ENCODE measurements at regions of chr2 and their contacts with region 1.

Region 1: DNA sequence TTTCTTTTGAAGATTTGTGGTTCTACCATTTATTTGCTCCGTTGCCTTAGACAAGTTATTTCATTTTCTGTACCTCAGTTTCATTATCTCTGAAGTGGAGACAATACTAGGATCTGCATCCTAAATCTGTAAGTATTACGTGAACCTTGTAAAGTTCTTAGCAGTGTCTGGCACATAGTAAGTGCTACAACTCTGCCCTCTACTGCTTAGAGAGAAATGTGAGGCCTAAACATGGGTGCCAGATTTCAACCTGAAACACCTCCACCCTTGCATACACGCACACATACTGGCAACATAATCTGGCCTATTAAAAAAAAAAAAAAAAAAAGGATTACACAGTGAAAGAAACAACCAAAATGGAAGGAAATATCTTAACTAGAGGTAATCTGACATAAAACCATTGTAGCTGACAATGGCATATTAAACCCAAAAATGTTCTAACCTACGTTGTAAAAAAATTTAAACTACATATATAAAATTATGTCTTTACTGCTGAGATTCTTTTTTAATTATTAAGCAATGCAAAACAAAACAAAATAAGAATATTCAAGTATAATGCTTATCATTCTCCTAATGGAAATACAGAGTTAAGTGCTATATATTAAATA is 132.6 kb downstream of the MAP2 start:
- DNase-seq: no peak
- H3K4me3 ChIP-seq: no peak overlapping the region
- H3K27ac ChIP-seq: no peak overlapping the region
- H3K4me1 ChIP-seq: no peaks in the 10 kb centered on the region
- H3K27me3 ChIP-seq: no peaks in the 10 kb centered on the region
- CTCF ChIP-seq: peak; percentile 46 to 53

Region 2: GRCh38 chr2:209334198-209335017 is 222.1 kb before region 1 on chr2:
- intact Hi-C with region 1: loop called (anchors 5 kb)
- DNase-seq: peak; percentile 25 to 65
- H3K4me3 ChIP-seq: no peak overlapping the region
- H3K27ac ChIP-seq: no peak overlapping the region
- H3K4me1 ChIP-seq: peaks cover 0 to 4% (median 0%) of the 10 kb centered on the region in 4 donors
- H3K27me3 ChIP-seq: no peaks in the 10 kb centered on the region
- CTCF ChIP-seq: peak; percentile 81 to 91

Region 3: DNA sequence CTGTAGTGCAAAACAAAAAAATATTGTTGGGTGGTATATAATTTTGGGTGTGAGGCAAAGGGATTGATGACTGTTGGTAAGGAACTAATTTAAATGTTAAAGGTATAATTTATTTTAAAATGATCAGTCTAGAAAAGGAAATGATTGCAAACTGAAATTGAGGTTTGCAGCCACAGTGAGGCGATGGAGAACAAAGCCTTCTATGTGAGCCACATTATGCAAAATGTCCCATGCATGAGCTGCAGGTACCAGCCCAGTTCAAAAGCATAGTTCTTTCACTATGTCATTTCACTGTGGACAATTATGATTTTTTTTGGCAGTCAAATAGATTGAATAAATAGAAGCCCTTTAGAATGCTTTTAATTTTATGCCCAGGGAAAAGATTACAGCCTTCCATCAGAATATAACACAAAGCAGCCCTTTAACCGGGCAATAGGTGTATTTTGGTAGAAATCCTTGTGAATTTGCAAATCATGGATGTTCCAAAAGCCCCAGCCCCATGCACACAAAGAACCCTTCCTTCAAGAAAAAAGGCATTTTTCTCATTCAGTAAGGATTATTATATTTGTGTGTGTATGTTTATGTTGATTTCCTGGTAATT is 130.9 kb before region 1 on chr2:
- intact Hi-C with region 1: loop called (anchors 5 kb)
- DNase-seq: no peak
- H3K4me3 ChIP-seq: peak overlapping the region; percentile 79 to 82
- H3K27ac ChIP-seq: no peak overlapping the region
- H3K4me1 ChIP-seq: peaks cover 0 to 37% (median 8%) of the 10 kb centered on the region in 4 donors
- H3K27me3 ChIP-seq: no peaks in the 10 kb centered on the region
- CTCF ChIP-seq: peak; percentile 47 to 76

Measured in tibial artery (tissue), 4 donors.